ENCODE measurements at regions of chr2 and their contacts with region 1.

Region 1: GRCh38 chr2:127807678-127808353 is 3.2 kb downstream of the WDR33 start:
- DNase-seq: no peak
- H3K4me3 Mint-ChIP-seq: peak overlapping the region; percentile 54
- H3K27ac Mint-ChIP-seq: no peak overlapping the region
- H3K4me1 Mint-ChIP-seq: peaks cover 57% of the 10 kb centered on the region
- H3K27me3 Mint-ChIP-seq: no peaks in the 10 kb centered on the region

Region 2: DNA sequence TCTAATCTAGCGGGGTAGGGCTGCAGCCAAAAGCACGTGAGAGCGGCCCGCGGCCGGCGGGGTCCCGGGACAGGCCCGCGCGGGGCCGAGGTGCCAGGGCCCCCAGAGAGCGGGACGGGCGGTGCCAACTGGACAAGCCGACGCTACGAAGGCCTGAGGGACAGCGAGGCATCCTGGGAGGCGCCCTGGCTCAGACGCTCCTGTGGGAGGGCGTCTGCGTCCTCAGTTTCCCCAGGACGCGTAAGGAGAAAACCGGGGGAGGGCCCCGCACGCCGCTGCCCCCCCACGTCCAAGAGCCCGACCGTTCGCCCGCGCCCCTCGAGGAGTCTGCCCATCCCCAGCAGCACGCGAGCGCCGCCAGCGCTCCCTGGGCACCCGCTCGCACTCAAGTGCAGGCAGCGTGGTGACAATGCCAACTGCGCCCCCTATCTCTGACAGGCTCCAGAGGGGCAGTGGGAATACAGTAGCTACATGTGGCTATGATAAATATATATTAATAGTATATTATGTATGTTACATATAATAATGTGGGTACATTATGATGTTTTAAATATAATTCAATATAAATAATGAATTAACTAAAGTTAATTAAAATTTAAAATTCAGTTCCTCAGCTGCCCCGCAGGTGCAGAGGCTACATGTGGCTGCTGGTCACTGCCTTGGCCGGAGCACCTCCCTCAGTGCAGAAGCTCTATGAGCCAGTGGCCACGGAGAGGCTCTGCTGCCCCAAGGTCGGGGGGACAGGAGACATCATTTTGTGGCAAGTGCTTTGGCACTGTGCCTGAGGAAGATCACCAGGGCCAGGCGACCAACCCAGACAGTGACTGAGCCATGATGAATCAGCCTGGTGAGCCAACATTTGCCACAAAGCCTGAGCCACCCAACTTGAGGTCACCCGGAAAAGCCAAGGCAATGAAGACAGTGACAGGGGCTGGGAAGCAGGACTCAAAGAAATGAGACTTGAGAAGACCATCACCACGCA is 112.0 kb before region 1 on chr2:
- CTCF ChIA-PET with region 1: no interaction called
- POLR2A ChIA-PET with region 1: no interaction called
- DNase-seq: peak; percentile 38
- H3K4me3 Mint-ChIP-seq: no peak overlapping the region
- H3K27ac Mint-ChIP-seq: no peak overlapping the region
- H3K4me1 Mint-ChIP-seq: peaks cover 7% of the 10 kb centered on the region
- H3K27me3 Mint-ChIP-seq: no peaks in the 10 kb centered on the region

Region 3: GRCh38 chr2:127796389-127796788 is 11.4 kb before region 1 on chr2:
- CTCF ChIA-PET with region 1: interaction called, 12 read pairs
- POLR2A ChIA-PET with region 1: interaction called, 3 read pairs
- DNase-seq: no peak
- H3K4me3 Mint-ChIP-seq: no peak overlapping the region
- H3K27ac Mint-ChIP-seq: no peak overlapping the region
- H3K4me1 Mint-ChIP-seq: peaks cover 29% of the 10 kb centered on the region
- H3K27me3 Mint-ChIP-seq: no peaks in the 10 kb centered on the region

Region 4: GRCh38 chr2:127834951-127835350 is 27.1 kb after region 1 on chr2:
- CTCF ChIA-PET with region 1: no interaction called
- POLR2A ChIA-PET with region 1: no interaction called
- DNase-seq: no peak
- H3K4me3 Mint-ChIP-seq: no peak overlapping the region
- H3K27ac Mint-ChIP-seq: no peak overlapping the region
- H3K4me1 Mint-ChIP-seq: peaks cover 12% of the 10 kb centered on the region
- H3K27me3 Mint-ChIP-seq: peaks cover 2% of the 10 kb centered on the region

Region 5: GRCh38 chr2:127943186-127943585 is 135.4 kb after region 1 on chr2:
- CTCF ChIA-PET with region 1: no interaction called
- POLR2A ChIA-PET with region 1: no interaction called
- DNase-seq: no peak
- H3K4me3 Mint-ChIP-seq: no peak overlapping the region
- H3K27ac Mint-ChIP-seq: no peak overlapping the region
- H3K4me1 Mint-ChIP-seq: no peaks in the 10 kb centered on the region
- H3K27me3 Mint-ChIP-seq: no peaks in the 10 kb centered on the region

Measured in activated CD4-positive, alpha-beta T cell treated with anti-CD3 and anti-CD28 coated beads, Interleukin-2, amount 10 ng/mL, durations not matched to agents 7 days and 5 days (primary cell).